ENCODE measurements at regions of chr2 and their contacts with region 1.

Region 1: DNA sequence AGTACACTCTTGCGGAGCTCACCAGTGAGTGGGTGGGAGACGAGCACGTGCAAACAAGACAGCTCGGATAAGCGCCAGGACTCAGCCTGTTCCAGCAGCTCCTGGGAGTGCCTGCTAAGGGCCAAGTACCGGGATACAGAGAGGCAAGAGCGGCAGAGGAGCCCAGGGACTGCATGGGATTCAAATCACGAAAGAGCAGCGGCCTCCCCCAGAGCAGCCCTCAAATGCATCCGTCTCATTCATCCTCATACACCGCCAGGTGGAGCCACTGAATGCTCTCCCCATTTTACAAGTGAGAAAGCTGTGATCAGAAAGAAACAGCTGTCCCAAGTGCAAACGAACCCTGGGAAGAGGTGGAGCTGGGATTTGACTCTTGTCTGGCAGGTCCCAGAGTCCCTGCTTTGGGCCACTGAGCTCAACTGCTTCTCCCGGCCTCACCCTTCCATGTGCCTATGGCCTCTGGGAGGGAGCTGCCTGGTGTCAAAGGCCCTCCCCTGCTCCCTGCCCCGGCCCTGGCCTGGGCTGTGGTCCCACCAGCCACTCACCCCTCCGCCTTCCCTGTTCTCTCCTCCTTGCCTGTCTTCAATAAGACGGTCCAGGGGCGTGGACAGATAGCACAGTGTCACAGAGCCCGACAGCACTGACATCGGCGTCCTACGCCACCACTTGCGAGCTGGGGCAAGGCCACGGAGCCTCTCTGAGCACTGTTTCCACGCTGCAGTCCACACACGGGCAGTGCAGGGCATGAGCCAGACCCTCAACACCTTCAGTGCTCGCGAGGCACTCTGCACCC is 72.8 kb upstream of the TAF1B start:
- DNase-seq: peak; percentile 68 to 81
- H3K4me3 ChIP-seq: no peak overlapping the region
- H3K27ac ChIP-seq: no peak overlapping the region; the same call in 1 of the 2 replicates
- H3K4me1 ChIP-seq: peaks cover 0 to 29% (median 22%) of the 10 kb centered on the region in 4 experiments; a peak in 6 of 7 replicates
- H3K27me3 ChIP-seq: peaks cover 0 to 2% (median under 1%) of the 10 kb centered on the region in 4 experiments; a peak in 1 of 7 replicates
- CTCF ChIP-seq: peak in 2 of 3 experiments; percentile 85 to 88; a peak in 3 of 4 replicates
- EP300 ChIP-seq: no peak
- POLR2A ChIP-seq: no peak
- RAD21 ChIP-seq: peak; percentile 64 to 69

Region 2: DNA sequence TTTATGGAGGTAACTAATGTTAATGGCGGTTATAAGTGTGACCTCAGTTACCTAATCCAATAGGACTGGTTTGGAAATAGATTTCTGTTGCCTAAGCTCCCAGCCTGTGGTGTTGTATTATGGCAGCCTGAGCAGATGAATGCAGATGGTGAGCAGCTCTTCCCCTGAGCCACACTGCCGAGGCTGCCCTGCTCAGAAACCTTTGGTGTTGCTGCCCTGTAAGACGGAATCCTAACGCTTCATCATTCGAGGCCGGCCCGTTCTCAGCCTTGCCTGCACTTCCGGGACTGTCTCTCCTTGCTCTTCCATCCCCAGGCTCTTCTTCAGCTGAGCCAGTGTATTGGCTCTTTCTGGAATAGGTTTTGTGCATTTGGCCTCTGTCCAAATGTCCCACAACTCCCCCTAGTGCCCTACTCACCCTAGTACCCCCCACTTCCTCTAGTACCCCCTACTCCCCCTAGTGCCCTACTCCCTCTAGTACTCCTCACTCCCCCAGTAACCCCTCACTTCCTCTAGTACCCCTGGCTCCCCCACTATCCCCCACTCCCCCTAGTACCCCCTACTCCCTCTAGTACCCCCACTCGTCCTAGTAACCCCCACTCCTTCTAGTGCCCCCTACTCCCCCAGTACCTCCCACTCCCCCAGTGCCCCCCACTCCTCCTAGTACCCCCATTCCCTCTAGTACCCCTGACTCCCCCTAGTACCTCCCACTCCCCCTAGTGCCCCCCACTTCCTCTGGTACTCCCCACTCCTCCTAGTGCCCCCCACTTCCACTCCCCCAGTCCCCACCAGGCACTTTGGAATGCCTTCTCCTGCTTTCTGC is 33.2 kb before region 1 on chr2:
- CTCF ChIA-PET with region 1: interaction called, 13 read pairs
- POLR2A ChIA-PET with region 1: no interaction called
- DNase-seq: no peak
- H3K4me3 ChIP-seq: no peak overlapping the region
- H3K27ac ChIP-seq: no peak overlapping the region
- H3K4me1 ChIP-seq: no peaks in the 10 kb centered on the region
- H3K27me3 ChIP-seq: no peaks in the 10 kb centered on the region
- CTCF ChIP-seq: peak in 2 of 3 experiments; percentile 8 to 40; a peak in 2 of 4 replicates
- EP300 ChIP-seq: no peak
- POLR2A ChIP-seq: no peak
- RAD21 ChIP-seq: peak; percentile 12 to 17; a peak in 2 of 4 replicates

Region 3: GRCh38 chr2:9753276-9753600 is 17.3 kb before region 1 on chr2:
- CTCF ChIA-PET with region 1: interaction called, 103 read pairs
- POLR2A ChIA-PET with region 1: interaction called, 3 read pairs
- DNase-seq: no peak
- H3K4me3 ChIP-seq: no peak overlapping the region
- H3K27ac ChIP-seq: no peak overlapping the region
- H3K4me1 ChIP-seq: peaks cover 0 to 30% (median 11%) of the 10 kb centered on the region in 4 experiments; a peak in 6 of 7 replicates
- H3K27me3 ChIP-seq: peaks cover 0 to 6% (median 2%) of the 10 kb centered on the region in 4 experiments; a peak in 2 of 7 replicates
- CTCF ChIP-seq: no peak
- EP300 ChIP-seq: no peak
- POLR2A ChIP-seq: no peak
- RAD21 ChIP-seq: no peak

Region 4: DNA sequence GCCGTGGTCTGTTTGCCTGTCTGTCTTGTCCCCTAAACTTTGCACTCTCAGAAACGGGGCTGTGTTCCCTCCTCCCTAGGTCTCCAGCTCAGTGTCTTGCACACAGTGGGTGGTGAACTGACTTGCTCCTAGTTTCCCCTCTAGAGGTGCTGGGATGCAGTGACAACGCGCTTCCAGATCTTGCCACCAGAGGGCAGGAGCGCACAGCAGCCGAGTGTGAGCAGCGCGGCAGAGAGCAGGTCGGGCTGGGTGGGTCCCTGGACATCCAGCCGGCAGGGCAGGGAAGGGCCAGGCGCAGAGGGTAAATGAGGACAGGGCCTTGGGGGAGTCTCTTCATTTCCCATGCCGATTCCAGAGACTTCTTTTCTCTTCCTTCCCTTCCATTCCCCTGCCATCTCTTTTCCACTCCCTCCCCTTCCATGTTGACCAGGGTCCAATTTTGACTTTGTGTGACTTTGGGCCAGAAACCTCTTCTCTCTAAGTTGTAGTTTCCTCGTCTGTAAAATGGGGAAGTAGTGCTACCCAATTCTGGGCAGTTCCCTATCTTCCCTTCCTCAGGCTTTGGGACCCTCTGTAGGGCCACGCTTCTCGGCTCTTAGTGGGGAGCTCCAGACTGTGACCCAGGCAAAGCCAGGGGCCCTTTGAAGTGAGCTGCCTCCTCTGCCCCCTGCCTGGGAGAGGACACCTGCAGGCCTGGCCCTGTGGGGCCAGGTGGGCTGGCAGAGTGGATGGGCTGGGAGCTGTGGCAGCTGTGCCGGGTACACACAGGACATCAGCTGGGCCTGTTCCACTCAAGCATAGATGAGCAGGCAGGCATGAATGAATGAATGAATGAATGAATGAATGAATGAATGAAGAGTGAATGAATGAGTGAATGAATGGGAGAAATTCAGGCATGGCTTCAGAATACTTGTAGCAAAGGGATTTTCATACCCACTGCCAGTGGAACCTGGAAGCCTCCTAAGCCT is 29.4 kb after region 1 on chr2:
- CTCF ChIA-PET with region 1: interaction called, 52 read pairs
- POLR2A ChIA-PET with region 1: interaction called, 3 read pairs
- DNase-seq: peak; percentile 83 to 99
- H3K4me3 ChIP-seq: no peak overlapping the region
- H3K27ac ChIP-seq: no peak overlapping the region
- H3K4me1 ChIP-seq: peaks cover 0 to 8% (median 2%) of the 10 kb centered on the region in 4 experiments; a peak in 4 of 7 replicates
- H3K27me3 ChIP-seq: no peaks in the 10 kb centered on the region
- CTCF ChIP-seq: peak; percentile 99 to 100 (median 99)
- EP300 ChIP-seq: no peak
- POLR2A ChIP-seq: no peak
- RAD21 ChIP-seq: peak; percentile 91 to 94

Region 5: DNA sequence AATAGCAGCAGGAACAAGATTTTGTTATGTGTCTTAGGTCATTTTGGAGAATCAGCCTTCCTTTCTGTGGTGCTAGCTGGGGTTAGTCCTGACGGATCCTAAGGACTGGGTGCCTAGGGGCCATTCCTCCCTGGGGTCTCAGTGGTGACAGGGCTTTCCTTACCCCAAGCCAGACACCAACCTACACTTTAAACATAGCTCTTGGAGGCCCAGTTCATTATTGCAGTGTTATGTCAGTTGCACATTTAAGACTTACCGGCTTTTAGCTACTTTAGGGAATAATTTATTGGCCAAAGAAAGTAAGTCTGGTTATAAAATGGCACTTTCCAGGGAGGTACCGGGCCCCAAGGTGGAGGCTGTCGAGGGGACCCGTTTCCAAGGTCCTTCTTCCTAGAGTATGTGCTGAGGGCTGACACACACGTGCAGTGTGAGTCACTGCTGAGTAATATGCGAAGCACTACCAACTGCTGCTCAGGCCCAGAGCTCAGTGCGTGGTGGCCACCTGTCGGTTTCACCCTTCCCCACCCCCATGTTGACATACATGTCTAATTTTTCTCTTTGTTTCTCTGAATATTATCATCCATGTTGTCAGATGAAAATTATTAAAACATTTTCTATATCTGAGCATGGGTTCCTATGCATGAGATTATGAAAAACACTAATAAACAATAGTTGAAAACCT is 144.0 kb after region 1 on chr2:
- CTCF ChIA-PET with region 1: no interaction called
- POLR2A ChIA-PET with region 1: no interaction called
- DNase-seq: no peak
- H3K4me3 ChIP-seq: no peak overlapping the region
- H3K27ac ChIP-seq: no peak overlapping the region
- H3K4me1 ChIP-seq: no peaks in the 10 kb centered on the region
- H3K27me3 ChIP-seq: peaks cover 0 to under 1% (median 0%) of the 10 kb centered on the region in 4 experiments; a peak in 1 of 7 replicates
- CTCF ChIP-seq: no peak
- EP300 ChIP-seq: no peak
- POLR2A ChIP-seq: no peak
- RAD21 ChIP-seq: no peak

Region 6: GRCh38 chr2:9984217-9984739 is 213.8 kb after region 1 on chr2:
- CTCF ChIA-PET with region 1: interaction called, 11 read pairs
- POLR2A ChIA-PET with region 1: no interaction called
- DNase-seq: no peak
- H3K4me3 ChIP-seq: no peak overlapping the region
- H3K27ac ChIP-seq: no peak overlapping the region
- H3K4me1 ChIP-seq: no peaks in the 10 kb centered on the region
- H3K27me3 ChIP-seq: no peaks in the 10 kb centered on the region; a peak in 1 of 7 replicates
- CTCF ChIP-seq: peak in 2 of 3 experiments; percentile 45 to 59; a peak in 3 of 4 replicates
- EP300 ChIP-seq: no peak
- POLR2A ChIP-seq: no peak
- RAD21 ChIP-seq: peak; percentile 47 to 51